ENCODE measurements at regions of chr10 and their contacts with region 1.

Region 1: DNA sequence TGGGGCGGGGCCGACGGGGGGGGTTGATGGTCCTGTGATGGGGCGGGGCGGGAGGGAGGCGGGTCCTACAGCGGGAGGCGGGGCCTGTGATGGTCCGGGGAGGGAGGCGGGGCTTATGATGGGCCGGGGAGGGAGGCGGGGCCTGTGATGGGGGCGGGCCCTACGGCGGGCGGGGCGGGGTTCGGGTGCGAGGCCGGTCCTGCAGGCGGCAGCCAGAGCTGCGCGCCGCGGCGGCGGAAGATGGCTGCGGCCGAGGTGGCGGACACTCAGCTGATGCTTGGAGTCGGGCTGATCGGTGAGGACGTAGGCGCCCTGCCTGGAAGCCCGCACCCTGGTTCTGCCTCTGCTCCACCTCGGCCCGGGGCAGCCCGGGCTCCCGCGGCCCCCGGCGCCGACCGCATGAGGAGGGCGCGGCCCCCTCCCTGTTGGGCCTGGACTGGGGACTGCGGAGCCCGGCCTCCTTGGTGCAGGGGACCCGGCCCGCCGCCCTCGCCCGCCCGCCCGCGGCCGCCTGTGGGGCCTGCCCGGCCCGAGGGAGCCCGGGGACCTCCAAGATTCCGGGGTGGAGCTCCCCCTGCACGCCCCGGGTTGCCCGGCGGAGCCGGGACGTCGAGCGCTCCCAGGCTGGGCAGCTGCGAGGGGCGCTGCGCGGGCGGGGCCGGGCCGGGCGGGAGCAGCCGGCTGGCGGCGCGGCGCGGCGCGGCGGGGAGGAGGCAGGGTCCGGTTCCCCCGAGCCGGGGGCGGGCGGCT is at the start of gene DENND10:
- DNase-seq: peak; percentile 88
- H3K4me3 ChIP-seq: peak within 1 kb of the TSS; percentile 83 to 91
- H3K27ac ChIP-seq: peak within 1 kb of the TSS; percentile 61 to 77
- H3K4me1 ChIP-seq: no peaks in the 10 kb centered on the region
- H3K27me3 ChIP-seq: no peaks in the 10 kb centered on the region
- CTCF ChIP-seq: peak in 2 of 4 experiments; percentile 21 to 37
- POLR2A ChIP-seq: peak; percentile 91
- total RNA-seq, gene DENND10: 31.2 to 42.4 TPM

Region 2: DNA sequence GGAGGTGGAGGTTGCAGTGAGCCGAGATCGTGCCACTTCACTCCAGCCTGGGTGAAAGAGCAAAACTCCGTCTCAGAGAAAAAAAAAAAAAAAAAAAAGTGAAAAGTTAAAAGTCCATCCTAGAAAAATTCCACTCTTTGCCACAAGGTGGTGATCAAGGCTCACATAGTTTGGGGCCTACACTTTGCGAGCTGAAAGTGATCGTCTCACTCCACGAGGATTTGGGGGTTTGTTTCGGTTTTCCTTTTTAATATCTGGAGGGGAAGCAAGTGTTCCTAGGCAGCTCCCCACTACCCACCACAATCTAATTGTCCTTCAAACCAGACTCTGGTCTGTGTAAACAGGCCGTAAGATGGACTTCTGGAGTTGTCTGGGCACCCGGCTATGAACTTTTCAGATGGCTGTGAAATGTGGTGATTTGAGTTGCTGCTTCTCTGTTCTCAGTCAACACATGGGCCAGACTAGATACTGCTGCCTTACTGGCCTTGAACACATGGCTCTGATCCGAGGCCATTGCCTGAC is 535.7 kb before region 1 on chr10:
- intact Hi-C with region 1: no loop called
- DNase-seq: peak; percentile 53
- H3K4me3 ChIP-seq: no peak overlapping the region
- H3K27ac ChIP-seq: no peak overlapping the region
- H3K4me1 ChIP-seq: no peaks in the 10 kb centered on the region
- H3K27me3 ChIP-seq: no peaks in the 10 kb centered on the region
- CTCF ChIP-seq: peak; percentile 69 to 85 (median 72)
- POLR2A ChIP-seq: no peak

Region 3: GRCh38 chr10:118754720-118755480 is 349.2 kb before region 1 on chr10 and contains the start of gene CACUL1:
- intact Hi-C with region 1: loop called (anchors 10 kb)
- DNase-seq: peak; percentile 100
- H3K4me3 ChIP-seq: peak within 1 kb of the TSS; percentile 76 to 98
- H3K27ac ChIP-seq: peak within 1 kb of the TSS; percentile 88 to 90
- H3K4me1 ChIP-seq: peaks cover 4% of the 10 kb centered on the region
- H3K27me3 ChIP-seq: no peaks in the 10 kb centered on the region
- CTCF ChIP-seq: peak in 2 of 4 experiments; percentile 6 to 7
- POLR2A ChIP-seq: peak; percentile 89
- total RNA-seq, gene CACUL1: 23.7 to 38.1 TPM

Region 4: GRCh38 chr10:118948786-118949185 is 155.3 kb before region 1 on chr10:
- intact Hi-C with region 1: no loop called
- DNase-seq: no peak
- H3K4me3 ChIP-seq: no peak overlapping the region
- H3K27ac ChIP-seq: no peak overlapping the region
- H3K4me1 ChIP-seq: no peaks in the 10 kb centered on the region
- H3K27me3 ChIP-seq: no peaks in the 10 kb centered on the region
- CTCF ChIP-seq: no peak
- POLR2A ChIP-seq: no peak

Region 5: GRCh38 chr10:119080521-119081260 is 23.4 kb before region 1 on chr10 and contains the start of gene EIF3A:
- intact Hi-C with region 1: loop called (anchors 1 kb)
- DNase-seq: peak; percentile 90
- H3K4me3 ChIP-seq: peak within 1 kb of the TSS; percentile 59 to 98
- H3K27ac ChIP-seq: peak within 1 kb of the TSS; percentile 90 to 97
- H3K4me1 ChIP-seq: peaks cover 4% of the 10 kb centered on the region
- H3K27me3 ChIP-seq: no peaks in the 10 kb centered on the region
- CTCF ChIP-seq: peak in 2 of 4 experiments; percentile 10 to 19
- POLR2A ChIP-seq: peak; percentile 98
- total RNA-seq, gene EIF3A: 77.1 to 88.0 TPM

Region 6: GRCh38 chr10:119395280-119395989 is 291.4 kb after region 1 on chr10:
- intact Hi-C with region 1: no loop called
- DNase-seq: no peak
- H3K4me3 ChIP-seq: no peak overlapping the region
- H3K27ac ChIP-seq: no peak overlapping the region
- H3K4me1 ChIP-seq: no peaks in the 10 kb centered on the region
- H3K27me3 ChIP-seq: no peaks in the 10 kb centered on the region
- CTCF ChIP-seq: no peak
- POLR2A ChIP-seq: no peak